ENCODE measurements at regions of chr13 and their contacts with region 1.

Region 1: DNA sequence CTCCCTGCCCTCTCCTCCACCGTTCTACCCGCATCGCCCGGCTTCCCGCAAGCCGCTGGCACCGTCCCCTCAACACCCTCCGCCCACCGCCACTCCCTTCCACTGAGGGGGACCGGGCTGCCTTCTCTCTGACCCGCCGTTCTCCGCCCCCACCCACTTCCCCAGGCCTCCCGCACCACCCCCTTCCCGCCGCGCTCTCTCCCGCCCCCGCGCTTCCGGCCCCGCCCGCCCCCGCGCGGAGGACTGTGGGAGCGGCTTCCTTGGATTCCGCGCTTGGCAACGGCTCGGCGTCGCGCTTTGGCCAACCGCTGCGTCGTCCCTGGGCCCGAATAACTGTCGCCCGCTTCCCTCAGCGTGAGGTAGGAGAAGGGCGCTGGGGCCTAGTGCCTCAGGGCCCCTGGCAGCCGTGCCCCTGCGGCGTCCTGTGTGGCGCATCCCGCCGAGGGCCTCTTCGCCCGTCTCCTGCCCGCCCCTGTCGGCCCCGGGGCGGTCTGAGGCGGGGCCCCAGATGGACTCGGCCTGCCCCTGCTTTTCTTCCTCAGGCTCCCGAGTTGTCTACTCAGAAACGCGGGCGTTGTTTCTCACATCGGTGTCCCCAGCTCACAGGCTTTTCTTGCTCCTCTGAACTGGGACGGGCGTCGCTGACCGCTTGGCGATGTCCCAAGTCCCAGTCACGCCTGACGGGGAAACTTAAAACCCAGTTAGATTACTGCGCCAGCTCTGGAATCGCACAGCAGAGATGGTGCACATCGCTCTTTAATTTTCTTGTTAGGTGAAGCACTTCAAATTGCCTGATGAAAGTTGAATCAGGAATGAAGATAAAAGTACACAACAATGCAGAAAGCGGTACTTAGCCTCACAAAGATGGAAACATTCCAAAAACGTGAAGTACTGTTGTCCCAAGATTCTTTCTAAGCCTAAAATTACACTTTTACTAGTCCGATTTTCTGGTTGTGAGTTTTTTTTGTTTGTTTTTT is at the start of gene IFT88:
- DNase-seq: peak; percentile 97
- H3K4me3 Mint-ChIP-seq: peak within 1 kb of the TSS; percentile 91
- H3K27ac Mint-ChIP-seq: peak within 1 kb of the TSS; percentile 88
- H3K4me1 Mint-ChIP-seq: peaks cover 23% of the 10 kb centered on the region
- H3K27me3 Mint-ChIP-seq: no peaks in the 10 kb centered on the region
- total RNA-seq, gene IFT88: 2.2 and 2.9 TPM in 2 replicates

Region 2: GRCh38 chr13:20035130-20035529 is 532.1 kb before region 1 on chr13:
- intact Hi-C with region 1: no loop called
- DNase-seq: no peak
- H3K4me3 Mint-ChIP-seq: no peak overlapping the region
- H3K27ac Mint-ChIP-seq: no peak overlapping the region
- H3K4me1 Mint-ChIP-seq: no peaks in the 10 kb centered on the region
- H3K27me3 Mint-ChIP-seq: no peaks in the 10 kb centered on the region

Region 3: DNA sequence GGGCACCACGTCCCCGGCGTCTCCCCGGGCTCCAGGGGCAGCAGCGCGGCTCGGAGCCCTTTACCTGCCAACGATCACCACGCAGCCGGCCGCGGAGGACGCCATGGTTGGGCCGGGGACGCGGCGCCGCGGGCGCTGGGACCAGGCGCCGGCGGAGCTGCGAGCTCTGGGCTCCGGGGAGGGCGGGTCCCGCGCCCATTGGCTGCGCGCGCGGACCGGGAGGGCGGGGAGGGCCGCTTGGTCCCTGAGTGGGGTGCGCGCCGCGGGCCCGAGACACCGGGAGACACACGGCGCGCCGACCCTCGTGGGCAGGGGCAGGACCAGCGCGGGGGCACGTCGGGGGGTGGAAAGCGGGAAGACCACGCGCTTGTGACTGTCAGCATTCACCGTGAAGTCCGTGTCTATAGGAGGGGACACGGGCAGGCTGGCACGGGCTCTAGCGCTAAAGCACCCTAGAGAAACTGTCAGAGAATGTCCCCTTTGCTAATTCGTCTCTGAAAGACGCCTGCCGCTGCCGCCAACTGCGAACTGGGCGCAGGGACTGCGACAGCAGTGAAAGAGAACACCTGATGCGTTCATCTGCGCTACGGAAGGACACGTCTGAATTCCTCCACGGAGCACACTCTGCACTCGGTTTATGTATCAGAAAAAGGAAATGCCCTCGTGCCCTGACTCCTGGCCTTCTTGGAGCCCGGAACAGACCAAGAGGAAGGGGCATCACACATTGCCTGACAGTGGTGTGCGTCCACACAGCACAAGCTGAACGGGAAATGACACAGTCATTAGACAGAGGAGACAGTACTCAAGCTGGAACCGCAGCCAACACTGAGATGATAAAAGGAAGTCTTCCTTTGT is 41.3 kb before region 1 on chr13 and contains the start of gene CRYL1:
- intact Hi-C with region 1: loop called (anchors 1 kb)
- DNase-seq: peak; percentile 92
- H3K4me3 Mint-ChIP-seq: peak within 1 kb of the TSS; percentile 79
- H3K27ac Mint-ChIP-seq: peak within 1 kb of the TSS; percentile 79
- H3K4me1 Mint-ChIP-seq: peaks cover 19% of the 10 kb centered on the region
- H3K27me3 Mint-ChIP-seq: no peaks in the 10 kb centered on the region
- total RNA-seq, gene CRYL1: 5.8 and 7.1 TPM in 2 replicates

Region 4: GRCh38 chr13:20553311-20553710 is 13.9 kb before region 1 on chr13:
- intact Hi-C with region 1: no loop called
- DNase-seq: no peak
- H3K4me3 Mint-ChIP-seq: no peak overlapping the region
- H3K27ac Mint-ChIP-seq: no peak overlapping the region
- H3K4me1 Mint-ChIP-seq: no peaks in the 10 kb centered on the region
- H3K27me3 Mint-ChIP-seq: peaks cover 2% of the 10 kb centered on the region

Region 5: DNA sequence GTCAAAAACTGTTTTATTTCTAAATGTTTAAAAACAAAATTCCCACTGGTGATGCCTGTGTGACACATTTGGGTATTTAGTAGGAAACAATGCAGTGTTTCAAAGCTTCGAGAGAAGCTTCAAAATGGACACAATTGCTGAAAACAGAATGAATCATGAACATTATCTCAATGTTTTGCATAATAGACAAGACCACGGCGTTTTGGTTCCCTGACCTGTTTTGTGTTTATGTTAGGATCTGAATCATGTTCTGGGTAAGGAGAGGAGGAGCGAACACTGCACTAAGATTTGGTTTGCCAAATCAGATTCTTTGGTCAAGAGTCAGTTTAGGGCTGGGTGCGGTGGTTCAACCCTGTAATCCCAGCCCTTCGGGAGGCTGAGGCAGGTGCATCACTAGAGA is 42.0 kb after region 1 on chr13:
- intact Hi-C with region 1: no loop called
- DNase-seq: no peak
- H3K4me3 Mint-ChIP-seq: no peak overlapping the region
- H3K27ac Mint-ChIP-seq: no peak overlapping the region
- H3K4me1 Mint-ChIP-seq: no peaks in the 10 kb centered on the region
- H3K27me3 Mint-ChIP-seq: no peaks in the 10 kb centered on the region

Region 6: DNA sequence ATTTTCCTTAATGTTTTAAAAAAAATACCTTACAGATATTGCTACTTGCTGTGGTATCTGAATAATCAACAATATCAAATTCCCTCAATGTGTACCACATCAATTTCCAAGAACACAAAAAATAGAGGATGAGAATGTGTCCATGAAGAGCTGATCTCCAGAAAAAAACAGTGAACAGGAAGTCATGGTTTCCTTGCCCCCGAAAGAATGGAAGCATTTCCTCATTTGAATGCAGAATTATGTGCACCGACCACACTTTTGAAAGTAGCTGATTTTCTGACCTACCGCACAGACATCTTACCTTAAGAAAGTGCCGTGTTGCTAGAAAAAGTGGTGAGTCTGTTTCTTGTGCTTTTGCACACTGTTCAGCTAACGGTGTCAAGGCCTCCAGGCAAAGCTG is 220.0 kb after region 1 on chr13:
- intact Hi-C with region 1: no loop called
- DNase-seq: no peak
- H3K4me3 Mint-ChIP-seq: no peak overlapping the region
- H3K27ac Mint-ChIP-seq: no peak overlapping the region
- H3K4me1 Mint-ChIP-seq: peaks cover 4% of the 10 kb centered on the region
- H3K27me3 Mint-ChIP-seq: no peaks in the 10 kb centered on the region

Measured in activated CD4-positive, alpha-beta T cell treated with anti-CD3 and anti-CD28 coated beads, Interleukin-2, amount 10 ng/mL, durations not matched to agents 24 days and 14 days (primary cell).